HepG2 (cell line): ENCODE measurements at regions of chr3 and their contacts with region 1.

Region 1: DNA sequence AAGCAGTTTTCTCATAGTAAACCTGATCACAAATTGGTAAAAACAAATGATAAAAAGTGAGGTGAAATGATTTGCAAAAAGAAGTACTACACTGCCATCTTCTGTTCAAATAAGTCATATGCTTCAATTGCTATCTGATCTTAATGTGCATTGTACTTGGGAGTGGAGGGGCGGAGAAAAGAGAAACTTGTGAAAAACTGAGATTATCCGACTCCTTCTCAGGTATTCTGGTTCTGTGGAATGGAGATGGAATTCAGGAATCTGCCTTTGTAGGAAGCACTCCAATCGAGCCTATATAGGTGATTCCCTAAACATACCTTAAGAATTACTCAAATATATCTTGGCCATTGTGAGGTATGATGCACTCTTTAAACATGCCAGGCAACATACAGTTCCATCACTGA is 180.6 kb downstream of the CHL1 start:
- DNase-seq: peak; percentile 42
- ATAC-seq: peak; percentile 57
- H3K4me3 ChIP-seq: no peak overlapping the region
- H3K27ac ChIP-seq: no peak overlapping the region
- H3K4me1 ChIP-seq: no peaks in the 10 kb centered on the region
- H3K27me3 ChIP-seq: no peaks in the 10 kb centered on the region
- CTCF ChIP-seq: peak; percentile 65
- EP300 ChIP-seq: no peak
- POLR2A ChIP-seq: no peak
- RAD21 ChIP-seq: 0 out of 2 replicates have a peak, but pooled peaks have one; percentile 17

Region 2: GRCh38 chr3:308597-309321 is 68.4 kb before region 1 on chr3:
- CTCF ChIA-PET with region 1: no interaction called
- POLR2A ChIA-PET with region 1: no interaction called
- in situ Hi-C with region 1: no loop called
- intact Hi-C with region 1: no loop called
- DNase-seq: no peak
- ATAC-seq: no peak
- H3K4me3 ChIP-seq: no peak overlapping the region
- H3K27ac ChIP-seq: no peak overlapping the region
- H3K4me1 ChIP-seq: no peaks in the 10 kb centered on the region
- H3K27me3 ChIP-seq: no peaks in the 10 kb centered on the region
- CTCF ChIP-seq: no peak
- EP300 ChIP-seq: no peak
- POLR2A ChIP-seq: no peak
- RAD21 ChIP-seq: no peak

Region 3: DNA sequence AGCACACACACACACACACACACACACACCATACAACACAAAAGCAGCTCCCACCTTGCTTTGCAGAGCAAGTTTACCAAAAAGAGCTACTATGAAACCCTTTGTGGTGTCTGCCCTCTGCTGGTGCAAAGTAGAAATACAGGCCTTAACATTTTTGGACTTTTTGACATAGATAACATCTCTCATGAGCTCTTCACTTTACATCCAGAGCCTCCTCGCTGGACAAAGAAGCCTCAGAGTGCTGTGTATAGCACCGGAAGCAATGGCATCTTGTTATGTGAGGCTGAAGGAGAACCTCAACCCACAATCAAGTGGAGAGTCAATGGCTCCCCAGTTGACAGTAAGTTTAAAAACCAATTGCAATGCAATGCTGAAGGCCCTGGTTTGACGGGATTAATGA is 22.7 kb before region 1 on chr3:
- CTCF ChIA-PET with region 1: interaction called, 3 read pairs
- POLR2A ChIA-PET with region 1: no interaction called
- in situ Hi-C with region 1: no loop called
- intact Hi-C with region 1: loop called (anchors 1 kb)
- DNase-seq: peak; percentile 56
- ATAC-seq: peak; percentile 63
- H3K4me3 ChIP-seq: no peak overlapping the region
- H3K27ac ChIP-seq: no peak overlapping the region
- H3K4me1 ChIP-seq: no peaks in the 10 kb centered on the region
- H3K27me3 ChIP-seq: no peaks in the 10 kb centered on the region
- CTCF ChIP-seq: peak; percentile 81
- EP300 ChIP-seq: no peak
- POLR2A ChIP-seq: no peak
- RAD21 ChIP-seq: peak; percentile 74